ENCODE measurements at regions of chr4 and their contacts with region 1.

Region 1: GRCh38 chr4:169619959-169620879 is at the start of gene CLCN3:
- DNase-seq: peak; percentile 97
- H3K4me3 ChIP-seq: peak within 1 kb of the TSS; percentile 88
- H3K27ac ChIP-seq: peak within 1 kb of the TSS; percentile 95
- H3K4me1 ChIP-seq: peaks cover 9% of the 10 kb centered on the region
- H3K27me3 ChIP-seq: no peaks in the 10 kb centered on the region
- CTCF ChIP-seq: no peak
- total RNA-seq, gene CLCN3: 59.8 and 63.0 TPM in 2 replicates

Region 2: DNA sequence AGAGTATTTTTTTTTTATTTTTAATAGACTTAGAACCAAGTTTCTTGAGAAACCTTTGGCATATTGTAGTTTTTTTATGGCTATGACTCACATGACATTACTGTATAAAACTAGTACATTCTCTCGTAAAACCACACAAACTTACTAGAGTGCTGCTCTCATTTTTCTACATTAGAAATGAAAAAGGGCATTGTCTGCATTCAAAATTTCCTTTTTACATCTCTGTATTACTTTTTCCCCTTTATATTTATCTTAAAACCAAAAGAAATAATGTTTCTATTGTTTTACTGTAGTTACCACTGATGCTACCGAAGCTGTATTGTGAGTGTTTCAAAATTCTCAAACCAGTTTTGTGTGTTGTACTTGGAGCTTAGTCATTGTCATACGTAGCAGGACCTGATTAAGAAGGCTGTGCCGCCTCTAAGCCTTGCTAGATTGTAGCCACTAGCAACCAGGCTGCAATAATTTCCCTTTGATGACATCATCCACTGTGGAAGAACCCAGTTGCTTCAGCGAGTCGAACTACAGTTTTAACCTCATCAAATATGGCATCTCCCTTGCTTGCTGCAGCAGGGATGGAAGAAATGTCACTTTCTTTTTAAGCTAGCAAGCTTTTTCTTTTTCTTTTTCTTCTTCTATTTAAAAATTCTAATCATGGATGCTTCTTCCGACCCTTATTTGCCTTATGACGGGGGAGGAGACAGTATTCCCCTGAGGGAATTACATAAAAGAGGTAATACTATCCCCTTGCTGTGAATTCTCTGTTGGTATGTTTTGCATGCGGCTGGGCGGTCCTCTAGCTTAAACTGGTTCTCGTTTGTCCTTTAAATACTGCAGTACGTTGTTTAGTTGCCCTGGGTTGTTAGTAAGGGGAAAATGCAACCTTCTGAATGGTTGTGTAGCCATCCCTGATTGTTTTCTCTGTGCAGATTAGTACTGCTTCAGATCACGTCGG is 39.8 kb after region 1 on chr4:
- CTCF ChIA-PET with region 1: no interaction called
- POLR2A ChIA-PET with region 1: no interaction called
- intact Hi-C with region 1: loop called (anchors 2 kb)
- DNase-seq: peak; percentile 98
- H3K4me3 ChIP-seq: peak overlapping the region; percentile 48
- H3K27ac ChIP-seq: peak overlapping the region; percentile 94
- H3K4me1 ChIP-seq: peaks cover 41% of the 10 kb centered on the region
- H3K27me3 ChIP-seq: no peaks in the 10 kb centered on the region
- CTCF ChIP-seq: no peak

Region 3: DNA sequence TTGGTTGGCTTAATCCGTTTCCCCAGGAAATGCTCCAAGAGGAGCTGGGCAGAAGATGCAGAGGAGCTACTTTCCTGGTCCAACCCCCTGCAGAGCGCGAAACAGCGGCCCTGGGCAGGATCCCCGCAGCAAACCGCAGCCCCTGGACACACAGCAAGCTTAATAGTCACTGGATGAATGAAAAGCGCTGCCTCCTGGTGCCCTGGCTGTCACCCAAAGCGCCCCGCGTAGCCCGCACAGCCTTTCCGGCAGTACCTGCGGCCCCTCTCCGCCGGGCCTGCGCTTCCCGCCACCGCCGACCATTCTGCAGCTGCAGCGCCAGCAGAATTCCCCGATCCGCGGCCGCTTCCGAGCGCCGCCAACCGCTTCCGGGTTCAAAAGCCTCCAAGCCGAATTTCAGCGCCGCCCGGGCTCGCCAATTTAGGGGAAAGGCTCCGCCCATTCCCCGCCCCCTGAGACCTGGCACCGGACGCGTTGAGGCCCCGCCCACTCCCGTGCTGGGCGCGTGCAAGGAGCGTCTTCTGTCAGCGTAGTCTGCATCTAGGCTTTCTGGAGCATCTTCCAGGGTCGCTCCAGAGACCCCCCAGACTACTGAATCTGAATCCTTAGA is 137.5 kb after region 1 on chr4 and contains the start of gene HPF1:
- CTCF ChIA-PET with region 1: no interaction called
- POLR2A ChIA-PET with region 1: no interaction called
- intact Hi-C with region 1: loop called (anchors 10 kb)
- DNase-seq: peak; percentile 96
- H3K4me3 ChIP-seq: peak within 1 kb of the TSS; percentile 66
- H3K27ac ChIP-seq: peak within 1 kb of the TSS; percentile 72
- H3K4me1 ChIP-seq: peaks cover 15% of the 10 kb centered on the region
- H3K27me3 ChIP-seq: no peaks in the 10 kb centered on the region
- CTCF ChIP-seq: no peak
- total RNA-seq, gene HPF1: 54.4 and 57.0 TPM in 2 replicates

Region 4: DNA sequence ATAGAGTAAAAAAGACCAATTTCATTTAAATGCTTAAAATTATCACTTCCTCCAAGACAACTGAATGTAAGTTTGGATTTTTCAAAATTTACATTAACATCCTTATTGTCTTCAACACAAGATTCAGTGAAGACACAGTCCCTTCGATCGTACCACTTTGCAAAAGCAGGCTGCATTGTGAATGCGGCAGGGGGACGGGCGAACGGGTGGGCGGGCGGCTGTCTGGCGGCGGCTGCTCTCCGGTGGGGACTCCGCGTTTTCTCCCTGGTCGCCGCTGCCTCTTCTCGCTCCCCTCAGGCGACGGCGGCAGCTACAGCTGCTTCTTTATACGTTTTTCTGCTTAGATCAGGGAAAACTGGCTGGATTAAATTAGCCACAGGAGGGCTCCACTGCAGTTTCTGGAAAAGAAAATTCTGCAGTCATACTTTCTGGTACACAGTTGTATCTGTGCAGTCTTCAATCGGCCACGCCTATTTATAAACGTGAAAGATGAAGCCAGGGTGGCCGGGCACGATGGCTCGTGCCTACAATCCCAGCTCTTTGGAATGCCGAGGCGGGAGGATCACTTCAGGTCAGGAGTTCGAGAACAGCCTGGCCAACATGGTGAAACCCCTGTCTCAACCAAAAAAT is 171.4 kb after region 1 on chr4:
- CTCF ChIA-PET with region 1: no interaction called
- POLR2A ChIA-PET with region 1: no interaction called
- intact Hi-C with region 1: loop called (anchors 10 kb)
- DNase-seq: peak; percentile 89
- H3K4me3 ChIP-seq: peak overlapping the region; percentile 28
- H3K27ac ChIP-seq: no peak overlapping the region
- H3K4me1 ChIP-seq: no peaks in the 10 kb centered on the region
- H3K27me3 ChIP-seq: peaks cover 43% of the 10 kb centered on the region
- CTCF ChIP-seq: peak; percentile 67

Region 5: GRCh38 chr4:170089668-170090351 is 469.6 kb after region 1 on chr4 and contains the start of gene AADAT:
- CTCF ChIA-PET with region 1: no interaction called
- POLR2A ChIA-PET with region 1: no interaction called
- intact Hi-C with region 1: loop called (anchors 10 kb)
- DNase-seq: peak; percentile 70
- H3K4me3 ChIP-seq: peak within 1 kb of the TSS; percentile 57
- H3K27ac ChIP-seq: peak within 1 kb of the TSS; percentile 38
- H3K4me1 ChIP-seq: peaks cover 33% of the 10 kb centered on the region
- H3K27me3 ChIP-seq: peaks cover 29% of the 10 kb centered on the region
- CTCF ChIP-seq: peak; percentile 74
- total RNA-seq, gene AADAT: 5.4 and 5.6 TPM in 2 replicates

Measured in A673 (cell line).